Breast epithelium (tissue), 4 donors: ENCODE measurements at regions of chr5 and their contacts with region 1.

Region 1: DNA sequence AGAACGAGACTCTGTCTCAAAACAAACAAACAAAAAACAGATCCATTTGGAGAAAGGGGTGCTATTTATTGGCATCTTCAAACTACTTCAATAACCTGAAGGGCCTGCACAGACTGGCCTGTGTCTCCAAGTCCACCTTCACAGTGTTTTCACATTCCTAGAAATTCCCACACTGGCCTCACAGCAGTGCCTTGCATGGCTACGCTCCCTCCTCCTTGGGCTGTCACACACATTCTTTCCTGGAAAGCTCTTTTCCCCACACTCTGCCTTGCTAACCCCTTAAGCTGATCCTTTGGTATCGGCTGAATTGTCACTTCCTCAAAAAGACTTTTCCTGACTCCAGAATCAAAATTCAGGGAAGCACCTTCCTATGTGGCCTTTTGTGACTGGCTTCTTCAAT is 19.8 kb downstream of the FAM151B start:
- DNase-seq: no peak
- H3K4me3 ChIP-seq: no peak overlapping the region
- H3K27ac ChIP-seq: no peak overlapping the region
- H3K4me1 ChIP-seq: no peaks in the 10 kb centered on the region
- H3K27me3 ChIP-seq: no peaks in the 10 kb centered on the region
- CTCF ChIP-seq: no peak
- POLR2A ChIP-seq: no peak

Region 2: GRCh38 chr5:80569961-80570786 is 62.5 kb after region 1 on chr5 and contains the start of gene ANKRD34B:
- intact Hi-C with region 1: loop called (anchors 2 kb)
- DNase-seq: no peak
- H3K4me3 ChIP-seq: peak within 1 kb of the TSS; percentile 22 to 65 (median 45)
- H3K27ac ChIP-seq: no peak within 1 kb of the TSS
- H3K4me1 ChIP-seq: no peaks in the 10 kb centered on the region
- H3K27me3 ChIP-seq: peaks cover 0 to 43% of the 10 kb centered on the region in 2 donors
- CTCF ChIP-seq: no peak
- POLR2A ChIP-seq: no peak
- total RNA-seq, gene ANKRD34B: not detected